Mammary epithelial cell (primary cell): ENCODE measurements at regions of chr6 and their contacts with region 1.

Region 1: GRCh38 chr6:108052706-108053105 is 21.8 kb downstream of the OSTM1 start:
- DNase-seq: no peak
- H3K4me3 ChIP-seq: no peak overlapping the region
- H3K27ac ChIP-seq: no peak overlapping the region
- H3K4me1 ChIP-seq: no peaks in the 10 kb centered on the region
- H3K27me3 ChIP-seq: no peaks in the 10 kb centered on the region
- CTCF ChIP-seq: no peak

Region 2: DNA sequence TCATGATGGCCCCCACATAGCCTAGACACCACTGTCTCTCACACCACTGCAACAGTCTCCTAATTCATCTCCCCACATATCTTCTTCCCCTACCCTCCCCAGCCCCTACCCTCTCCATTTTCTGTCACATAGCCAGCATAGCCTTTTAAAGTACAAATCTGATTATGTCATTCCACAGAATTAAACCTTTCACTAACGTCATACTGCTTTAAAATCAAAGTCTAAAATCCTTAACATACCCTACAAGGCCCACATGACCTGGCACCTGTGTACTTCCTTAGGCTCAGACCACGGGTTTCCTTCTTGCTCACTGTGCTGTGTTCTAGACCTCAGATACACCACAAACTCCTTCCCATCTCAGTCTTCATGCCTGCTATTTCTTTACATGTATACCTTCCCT is 15.9 kb after region 1 on chr6:
- CTCF ChIA-PET with region 1: no interaction called
- dilution Hi-C with region 1: no loop called
- in situ Hi-C with region 1: no loop called
- intact Hi-C with region 1: no loop called
- DNase-seq: no peak
- H3K4me3 ChIP-seq: no peak overlapping the region
- H3K27ac ChIP-seq: no peak overlapping the region
- H3K4me1 ChIP-seq: peaks cover 13% of the 10 kb centered on the region
- H3K27me3 ChIP-seq: no peaks in the 10 kb centered on the region
- CTCF ChIP-seq: no peak

Region 3: GRCh38 chr6:108223661-108224060 is 171.0 kb after region 1 on chr6:
- CTCF ChIA-PET with region 1: interaction called, 11 read pairs
- dilution Hi-C with region 1: no loop called
- in situ Hi-C with region 1: no loop called
- intact Hi-C with region 1: no loop called
- DNase-seq: no peak
- H3K4me3 ChIP-seq: no peak overlapping the region
- H3K27ac ChIP-seq: no peak overlapping the region
- H3K4me1 ChIP-seq: no peaks in the 10 kb centered on the region
- H3K27me3 ChIP-seq: no peaks in the 10 kb centered on the region
- CTCF ChIP-seq: no peak

Region 4: GRCh38 chr6:108526739-108527174 is 474.1 kb after region 1 on chr6:
- CTCF ChIA-PET with region 1: no interaction called
- dilution Hi-C with region 1: no loop called
- in situ Hi-C with region 1: no loop called
- intact Hi-C with region 1: loop called (anchors 5 kb)
- DNase-seq: peak; percentile 16
- H3K4me3 ChIP-seq: no peak overlapping the region
- H3K27ac ChIP-seq: no peak overlapping the region
- H3K4me1 ChIP-seq: no peaks in the 10 kb centered on the region
- H3K27me3 ChIP-seq: no peaks in the 10 kb centered on the region
- CTCF ChIP-seq: peak; percentile 78 to 80